WTC11 (cell line): ENCODE measurements at regions of chr9 and their contacts with region 1.

Region 1: GRCh38 chr9:2132484-2133082 is 117.4 kb downstream of the SMARCA2 start:
- DNase-seq: no peak
- ATAC-seq: no peak; the same call in 1 of the 2 replicates
- H3K4me3 Mint-ChIP-seq: no peak overlapping the region
- H3K27ac Mint-ChIP-seq: 0 out of 2 replicates have a peak overlapping the region, but pooled peaks have one; percentile 35
- H3K4me1 Mint-ChIP-seq: peaks cover 8% of the 10 kb centered on the region; the same call in 1 of the 2 replicates
- H3K27me3 Mint-ChIP-seq: no peaks in the 10 kb centered on the region
- CTCF ChIP-seq: peak; percentile 41; the same call in 1 of the 2 replicates

Region 2: GRCh38 chr9:2116073-2116472 is 16.5 kb before region 1 on chr9:
- CTCF ChIA-PET with region 1: interaction called, 13 read pairs
- POLR2A ChIA-PET with region 1: no interaction called
- DNase-seq: peak; percentile 55
- ATAC-seq: peak; percentile 91
- H3K4me3 Mint-ChIP-seq: no peak overlapping the region
- H3K27ac Mint-ChIP-seq: no peak overlapping the region
- H3K4me1 Mint-ChIP-seq: no peaks in the 10 kb centered on the region
- H3K27me3 Mint-ChIP-seq: no peaks in the 10 kb centered on the region
- CTCF ChIP-seq: peak; percentile 70

Region 3: DNA sequence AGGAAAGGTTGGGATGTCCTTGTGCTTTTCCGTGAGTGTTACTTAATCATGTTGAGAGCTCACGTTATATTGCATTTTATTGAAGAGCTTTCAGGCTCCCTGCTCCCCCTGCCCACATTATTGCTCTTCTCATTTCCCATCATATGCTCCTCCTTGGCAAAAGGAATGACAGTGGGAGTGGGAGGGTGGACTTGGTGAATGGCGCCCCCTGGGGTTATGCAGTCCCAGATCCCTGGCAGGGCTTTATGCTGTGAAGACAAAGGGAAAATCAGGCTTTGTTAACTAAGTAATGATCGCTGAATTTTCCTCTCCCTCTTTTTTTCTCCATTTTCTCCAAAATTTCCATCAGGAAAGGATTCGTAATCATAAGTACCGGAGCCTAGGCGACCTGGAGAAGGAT is 49.2 kb after region 1 on chr9:
- CTCF ChIA-PET with region 1: interaction called, 16 read pairs
- POLR2A ChIA-PET with region 1: no interaction called
- DNase-seq: peak; percentile 74
- ATAC-seq: peak; percentile 90
- H3K4me3 Mint-ChIP-seq: peak overlapping the region; percentile 26
- H3K27ac Mint-ChIP-seq: peak overlapping the region; percentile 97
- H3K4me1 Mint-ChIP-seq: peaks cover 46% of the 10 kb centered on the region
- H3K27me3 Mint-ChIP-seq: no peaks in the 10 kb centered on the region
- CTCF ChIP-seq: peak; percentile 53; the same call in 1 of the 2 replicates

Region 4: DNA sequence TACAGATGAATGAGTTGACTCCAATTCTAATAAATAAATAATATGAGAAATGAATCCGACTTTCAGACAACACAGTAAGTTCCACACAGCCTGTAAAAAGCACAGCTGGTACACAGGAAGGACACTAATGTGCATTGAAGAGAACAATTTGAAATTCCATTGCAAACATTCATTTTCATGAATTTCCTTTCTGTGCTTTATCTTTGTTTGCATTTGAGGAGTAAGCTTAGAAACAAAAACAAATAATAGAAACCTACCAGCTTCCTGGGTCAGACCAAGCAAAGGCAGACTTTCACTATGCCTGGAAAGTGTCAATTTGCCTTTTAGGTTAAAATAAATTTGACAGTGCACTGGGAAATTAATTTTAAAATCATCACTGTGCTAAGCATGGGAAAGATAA is 345.2 kb after region 1 on chr9:
- CTCF ChIA-PET with region 1: no interaction called
- POLR2A ChIA-PET with region 1: no interaction called
- DNase-seq: no peak
- ATAC-seq: no peak
- H3K4me3 Mint-ChIP-seq: no peak overlapping the region
- H3K27ac Mint-ChIP-seq: no peak overlapping the region
- H3K4me1 Mint-ChIP-seq: peaks cover 11% of the 10 kb centered on the region
- H3K27me3 Mint-ChIP-seq: no peaks in the 10 kb centered on the region
- CTCF ChIP-seq: no peak